Activated CD4-positive, alpha-beta T cell treated with anti-CD3 and anti-CD28 coated beads for 36 hours (primary cell): ENCODE measurements at regions of chr15 and their contacts with region 1.

Region 1: GRCh38 chr15:89416141-89416853 is 80.1 kb downstream of the RHCG start:
- DNase-seq: peak; percentile 93
- ATAC-seq: peak; percentile 92
- H3K4me3 Mint-ChIP-seq: no peak overlapping the region
- H3K27ac Mint-ChIP-seq: no peak overlapping the region
- H3K4me1 Mint-ChIP-seq: peaks cover 10% of the 10 kb centered on the region
- H3K27me3 Mint-ChIP-seq: peaks cover 75% of the 10 kb centered on the region

Region 2: GRCh38 chr15:89334510-89335288 is 81.6 kb before region 1 on chr15 and contains the start of gene POLG:
- CTCF ChIA-PET with region 1: no interaction called
- POLR2A ChIA-PET with region 1: no interaction called
- intact Hi-C with region 1: loop called in 1 of 2 experiments (anchors 1 kb)
- DNase-seq: peak; percentile 99
- ATAC-seq: peak; percentile 92
- H3K4me3 Mint-ChIP-seq: peak within 1 kb of the TSS; percentile 80
- H3K27ac Mint-ChIP-seq: peak within 1 kb of the TSS; percentile 87
- H3K4me1 Mint-ChIP-seq: peaks cover 56% of the 10 kb centered on the region
- H3K27me3 Mint-ChIP-seq: peaks cover 2% of the 10 kb centered on the region
- total RNA-seq, gene POLG: 63.2 to 80.4 TPM

Region 3: DNA sequence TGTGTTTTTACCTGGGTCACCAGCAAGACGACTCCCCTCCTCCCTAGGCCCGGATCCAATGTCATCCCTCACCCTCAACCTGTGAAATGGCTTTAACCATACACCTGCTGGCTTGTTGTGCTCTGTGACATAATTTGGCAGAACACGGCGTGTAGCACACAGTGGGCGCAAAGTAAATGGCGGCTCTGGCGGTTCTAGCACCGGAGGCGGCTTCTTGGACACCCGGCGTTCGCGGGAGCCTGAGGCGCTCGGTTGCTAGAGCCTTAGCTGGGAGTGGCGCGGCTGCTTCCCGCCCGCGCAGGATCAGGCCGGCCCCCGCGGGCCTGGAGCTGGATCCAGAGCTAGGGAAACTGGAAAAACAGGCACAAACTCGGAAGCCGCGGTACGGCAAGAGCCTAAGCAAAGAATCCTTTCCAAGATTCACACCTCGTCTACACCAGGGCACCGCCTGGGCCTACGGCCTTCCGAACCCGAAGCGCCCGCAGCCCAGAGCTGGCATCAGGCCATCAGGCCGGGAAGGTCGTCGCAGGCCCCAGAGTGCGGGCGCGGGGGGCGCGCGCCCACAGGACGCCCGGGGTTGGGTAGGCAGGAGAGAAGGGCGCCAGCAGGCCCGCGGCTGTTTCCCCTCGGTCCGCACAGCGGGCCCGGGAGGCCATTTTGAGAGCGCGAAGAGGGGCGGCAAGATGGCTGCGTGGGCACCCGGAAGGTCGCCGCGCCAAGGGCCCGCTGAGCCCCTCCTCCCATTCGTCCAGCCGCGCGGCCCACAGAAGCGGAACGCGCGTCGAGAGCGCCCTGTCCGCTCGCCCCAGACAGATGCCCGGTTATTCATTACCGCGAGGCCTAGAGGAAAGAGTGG is 37.8 kb before region 1 on chr15:
- CTCF ChIA-PET with region 1: interaction called, 15 read pairs
- POLR2A ChIA-PET with region 1: interaction called, 3 read pairs
- intact Hi-C with region 1: no loop called
- DNase-seq: peak; percentile 22
- ATAC-seq: no peak
- H3K4me3 Mint-ChIP-seq: peak overlapping the region; percentile 44
- H3K27ac Mint-ChIP-seq: no peak overlapping the region
- H3K4me1 Mint-ChIP-seq: peaks cover 7% of the 10 kb centered on the region
- H3K27me3 Mint-ChIP-seq: peaks cover 73% of the 10 kb centered on the region

Region 4: GRCh38 chr15:89430530-89431341 is 14.4 kb after region 1 on chr15:
- CTCF ChIA-PET with region 1: interaction called, 50 read pairs
- POLR2A ChIA-PET with region 1: interaction called, 3 read pairs
- intact Hi-C with region 1: loop called (anchors 1 to 2 kb)
- DNase-seq: peak; percentile 94
- ATAC-seq: peak; percentile 96
- H3K4me3 Mint-ChIP-seq: peak overlapping the region; percentile 71
- H3K27ac Mint-ChIP-seq: peak overlapping the region; percentile 55
- H3K4me1 Mint-ChIP-seq: peaks cover 7% of the 10 kb centered on the region
- H3K27me3 Mint-ChIP-seq: peaks cover 18% of the 10 kb centered on the region

Region 5: GRCh38 chr15:89472785-89473256 is 56.5 kb after region 1 on chr15:
- CTCF ChIA-PET with region 1: interaction called, 8 read pairs
- POLR2A ChIA-PET with region 1: no interaction called
- intact Hi-C with region 1: loop called in 1 of 2 experiments (anchors 1 kb)
- DNase-seq: peak; percentile 75
- ATAC-seq: peak; percentile 83
- H3K4me3 Mint-ChIP-seq: no peak overlapping the region
- H3K27ac Mint-ChIP-seq: no peak overlapping the region
- H3K4me1 Mint-ChIP-seq: no peaks in the 10 kb centered on the region
- H3K27me3 Mint-ChIP-seq: peaks cover 17% of the 10 kb centered on the region

Region 6: GRCh38 chr15:90075420-90076289 is 659.4 kb after region 1 on chr15:
- CTCF ChIA-PET with region 1: no interaction called
- POLR2A ChIA-PET with region 1: no interaction called
- intact Hi-C with region 1: no loop called
- DNase-seq: peak; percentile 78
- ATAC-seq: peak; percentile 79
- H3K4me3 Mint-ChIP-seq: no peak overlapping the region
- H3K27ac Mint-ChIP-seq: peak overlapping the region; percentile 47
- H3K4me1 Mint-ChIP-seq: peaks cover 24% of the 10 kb centered on the region
- H3K27me3 Mint-ChIP-seq: no peaks in the 10 kb centered on the region

Region 7: GRCh38 chr15:90165659-90166421 is 749.5 kb after region 1 on chr15:
- CTCF ChIA-PET with region 1: no interaction called
- POLR2A ChIA-PET with region 1: no interaction called
- intact Hi-C with region 1: no loop called
- DNase-seq: peak; percentile 81
- ATAC-seq: peak; percentile 97
- H3K4me3 Mint-ChIP-seq: no peak overlapping the region
- H3K27ac Mint-ChIP-seq: peak overlapping the region; percentile 74
- H3K4me1 Mint-ChIP-seq: peaks cover 18% of the 10 kb centered on the region
- H3K27me3 Mint-ChIP-seq: peaks cover 6% of the 10 kb centered on the region

Region 8: DNA sequence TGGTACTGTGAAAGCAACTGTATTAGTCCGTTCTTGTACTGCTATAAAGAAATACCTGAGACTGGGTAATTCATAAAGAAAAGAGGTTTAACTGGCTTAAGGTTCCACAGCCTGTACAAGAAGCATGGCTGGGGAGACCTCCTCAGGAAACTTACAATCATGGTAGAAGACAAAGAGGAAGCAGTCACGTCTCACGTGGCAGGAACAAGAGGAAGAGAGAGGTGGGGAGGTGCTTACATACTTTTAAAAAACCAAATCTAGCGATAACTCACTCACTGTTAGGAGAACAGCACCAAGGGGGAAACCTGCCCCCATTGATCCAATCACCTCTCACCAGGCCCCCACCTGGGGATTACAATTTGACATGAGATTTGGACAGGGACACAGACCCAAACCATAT is 1020.7 kb after region 1 on chr15:
- CTCF ChIA-PET with region 1: no interaction called
- POLR2A ChIA-PET with region 1: no interaction called
- intact Hi-C with region 1: no loop called
- DNase-seq: no peak
- ATAC-seq: no peak
- H3K4me3 Mint-ChIP-seq: no peak overlapping the region
- H3K27ac Mint-ChIP-seq: no peak overlapping the region
- H3K4me1 Mint-ChIP-seq: peaks cover 8% of the 10 kb centered on the region
- H3K27me3 Mint-ChIP-seq: no peaks in the 10 kb centered on the region